Heart left ventricle (tissue), 16 donors: ENCODE measurements at regions of chr7 and their contacts with region 1.

Region 1: DNA sequence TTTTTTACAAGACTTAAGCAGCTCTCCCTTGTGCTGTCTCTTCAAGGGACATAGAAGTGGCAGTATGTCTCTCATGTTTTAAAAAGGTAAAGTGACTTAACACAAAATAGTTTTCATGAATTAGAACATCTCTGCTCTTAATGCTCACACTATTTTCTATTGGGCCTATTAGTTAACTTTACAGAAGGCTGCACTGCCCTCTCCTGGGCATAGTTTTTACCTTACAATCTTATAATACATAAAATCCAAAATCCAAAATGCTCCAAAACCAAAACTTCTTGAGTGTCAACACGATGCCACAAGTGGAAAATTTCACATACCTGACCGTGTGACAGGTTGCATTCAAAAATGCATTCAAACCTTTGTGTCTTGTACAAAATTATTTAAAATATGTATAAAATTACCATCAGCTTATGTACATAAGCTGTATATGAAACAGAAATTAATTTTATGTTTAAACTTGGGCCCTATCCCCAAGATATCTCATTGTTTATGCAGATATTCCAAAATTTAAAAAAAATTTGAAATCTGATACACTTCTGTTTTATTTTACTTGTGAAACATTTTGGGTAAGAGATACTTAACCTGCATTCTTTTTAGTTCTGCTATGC is 25.8 kb downstream of the TES start:
- DNase-seq: peak in 3 of 5 donors; percentile 41 to 54 (median 52)
- ATAC-seq: peak in 3 of 4 donors; percentile 55 to 65 (median 56)
- H3K4me3 ChIP-seq: no peak overlapping the region
- H3K27ac ChIP-seq: peak overlapping the region in 1 of 12 donors; percentile 82
- H3K4me1 ChIP-seq: peaks cover 1 to 35% (median 13%) of the 10 kb centered on the region in 12 donors
- H3K27me3 ChIP-seq: no peaks in the 10 kb centered on the region
- CTCF ChIP-seq: peak; percentile 41 to 78 (median 58)
- POLR2A ChIP-seq: no peak

Region 2: GRCh38 chr7:116138202-116138801 is 97.8 kb before region 1 on chr7:
- intact Hi-C with region 1: loop called in 2 of 10 experiments (anchors 2 kb)
- DNase-seq: no peak
- ATAC-seq: peak; percentile 63 to 88 (median 84)
- H3K4me3 ChIP-seq: no peak overlapping the region
- H3K27ac ChIP-seq: peak overlapping the region in 1 of 12 donors; percentile 64
- H3K4me1 ChIP-seq: peaks cover 0 to 9% (median 0%) of the 10 kb centered on the region in 12 donors
- H3K27me3 ChIP-seq: no peaks in the 10 kb centered on the region
- CTCF ChIP-seq: peak; percentile 64 to 86 (median 77)
- POLR2A ChIP-seq: no peak

Region 3: DNA sequence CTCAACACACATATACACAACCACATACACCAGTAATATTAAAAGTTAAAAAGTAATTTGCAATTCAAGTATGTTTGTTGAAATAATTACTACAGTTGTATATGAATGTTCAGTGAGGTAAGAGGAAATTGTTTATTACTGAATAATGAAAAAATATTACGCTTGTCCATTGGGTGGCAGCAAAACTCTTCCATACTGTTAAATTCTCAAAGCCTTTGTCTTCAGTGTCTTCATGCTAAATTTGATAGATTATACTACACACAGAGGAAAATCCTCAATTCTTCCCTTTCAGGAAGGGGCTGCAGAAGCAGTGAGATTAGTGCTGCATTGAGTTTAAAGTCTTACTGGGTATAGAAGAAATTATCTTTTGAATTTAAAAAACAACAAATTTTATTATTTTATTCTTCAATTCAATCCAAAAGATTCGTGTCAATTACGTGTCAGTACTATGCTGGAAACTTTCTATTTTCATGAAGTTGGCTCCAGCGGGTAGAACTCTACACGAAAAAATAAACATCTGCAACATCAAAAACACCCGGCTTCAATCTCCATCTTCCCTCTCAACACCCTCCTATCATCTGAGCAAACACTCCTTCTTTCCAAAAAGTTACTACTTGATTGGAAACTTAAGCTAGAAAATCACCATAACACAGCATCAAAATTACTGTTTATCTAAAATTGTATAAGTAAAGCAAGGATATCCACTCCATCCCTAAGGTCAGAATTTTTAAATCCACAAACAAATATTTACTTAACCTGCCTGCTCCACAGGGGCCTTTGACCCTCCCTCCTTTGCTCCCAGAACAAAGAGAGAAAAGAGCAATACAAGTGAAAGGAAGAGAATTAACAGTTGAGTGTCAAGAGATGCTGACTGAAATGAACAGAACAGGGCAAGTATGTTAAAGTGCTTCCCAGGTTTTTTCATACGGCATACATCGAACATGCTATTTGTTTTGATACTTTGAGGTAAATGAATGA is 62.8 kb before region 1 on chr7:
- intact Hi-C with region 1: loop called in 5 of 10 experiments (anchors 2 to 5 kb)
- DNase-seq: no peak
- ATAC-seq: peak in 3 of 4 donors; percentile 36 to 59 (median 57)
- H3K4me3 ChIP-seq: no peak overlapping the region
- H3K27ac ChIP-seq: no peak overlapping the region
- H3K4me1 ChIP-seq: peaks cover 0 to 4% (median 0%) of the 10 kb centered on the region in 12 donors
- H3K27me3 ChIP-seq: no peaks in the 10 kb centered on the region
- CTCF ChIP-seq: peak; percentile 30 to 68 (median 58)
- POLR2A ChIP-seq: no peak

Region 4: DNA sequence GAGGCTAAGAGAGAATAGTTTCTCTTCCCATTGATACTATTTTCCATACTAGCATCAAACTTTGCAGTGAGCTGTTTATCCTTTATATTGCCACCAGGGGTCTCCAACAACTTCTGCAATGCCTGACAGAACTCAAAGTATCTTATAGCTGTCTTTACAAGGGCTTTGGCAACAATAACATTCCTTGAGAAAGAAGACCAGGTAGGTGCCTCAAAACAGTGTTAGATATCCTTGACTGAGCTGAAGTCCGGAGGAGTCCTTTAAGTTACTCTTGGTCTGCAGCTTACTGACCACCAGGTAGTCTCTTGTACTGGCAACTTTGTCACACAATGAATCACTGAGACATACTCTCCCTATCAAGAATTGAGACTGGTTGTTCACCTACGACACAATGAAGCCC is 55.8 kb before region 1 on chr7:
- intact Hi-C with region 1: loop called (anchors 1 to 2 kb)
- DNase-seq: no peak
- ATAC-seq: peak in 2 of 4 donors; percentile 22 to 53
- H3K4me3 ChIP-seq: no peak overlapping the region
- H3K27ac ChIP-seq: no peak overlapping the region
- H3K4me1 ChIP-seq: no peaks in the 10 kb centered on the region
- H3K27me3 ChIP-seq: no peaks in the 10 kb centered on the region
- CTCF ChIP-seq: peak; percentile 64 to 88 (median 79)
- POLR2A ChIP-seq: no peak

Region 5: GRCh38 chr7:116194115-116194514 is 42.0 kb before region 1 on chr7:
- intact Hi-C with region 1: loop called in 1 of 10 experiments (anchors 5 kb)
- DNase-seq: no peak
- ATAC-seq: no peak
- H3K4me3 ChIP-seq: no peak overlapping the region
- H3K27ac ChIP-seq: no peak overlapping the region
- H3K4me1 ChIP-seq: no peaks in the 10 kb centered on the region
- H3K27me3 ChIP-seq: no peaks in the 10 kb centered on the region
- CTCF ChIP-seq: no peak
- POLR2A ChIP-seq: no peak

Region 6: GRCh38 chr7:116211006-116211912 is 24.9 kb before region 1 on chr7:
- intact Hi-C with region 1: loop called in 1 of 10 experiments (anchors 2 kb)
- DNase-seq: peak; percentile 74 to 81 (median 79)
- ATAC-seq: peak; percentile 89 to 97 (median 94)
- H3K4me3 ChIP-seq: peak overlapping the region; percentile 58 to 87 (median 80)
- H3K27ac ChIP-seq: peak overlapping the region; percentile 82 to 97 (median 91)
- H3K4me1 ChIP-seq: peaks cover 0 to 50% (median 21%) of the 10 kb centered on the region in 12 donors
- H3K27me3 ChIP-seq: no peaks in the 10 kb centered on the region
- CTCF ChIP-seq: no peak
- POLR2A ChIP-seq: peak in 1 of 2 donors; percentile 84

Region 7: DNA sequence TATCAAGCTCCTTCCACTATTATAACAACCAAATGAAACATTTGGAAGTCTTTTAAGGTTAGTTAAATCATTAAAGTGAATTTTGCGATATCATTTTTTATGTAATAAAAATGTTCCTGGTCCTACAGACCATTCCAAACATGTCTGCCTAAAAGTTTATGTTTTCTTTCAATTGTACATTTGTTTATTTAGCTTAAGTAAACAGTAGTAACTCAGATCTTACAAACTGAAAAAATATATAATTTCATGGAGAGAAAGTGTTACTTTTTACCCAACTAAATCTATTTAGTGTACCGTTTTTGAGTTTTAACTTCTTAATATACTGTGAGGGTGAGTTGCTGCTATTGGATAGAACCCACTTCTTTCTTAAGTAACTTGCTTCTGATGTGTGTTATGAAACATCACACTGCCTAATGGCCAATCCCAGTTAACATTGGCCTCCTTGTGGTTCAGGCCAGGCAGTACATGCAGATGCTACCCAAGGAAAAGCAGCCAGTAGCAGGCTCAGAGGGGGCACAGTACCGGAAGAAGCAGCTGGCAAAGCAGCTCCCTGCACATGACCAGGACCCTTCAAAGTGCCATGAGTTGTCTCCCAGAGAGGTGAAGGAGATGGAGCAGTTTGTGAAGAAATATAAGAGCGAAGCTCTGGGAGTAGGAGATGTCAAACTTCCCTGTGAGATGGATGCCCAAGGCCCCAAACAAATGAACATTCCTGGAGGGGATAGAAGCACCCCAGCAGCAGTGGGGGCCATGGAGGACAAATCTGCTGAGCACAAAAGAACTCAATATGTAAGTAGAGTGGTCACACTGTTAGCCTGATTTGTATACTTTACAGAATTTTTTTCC is 13.8 kb after region 1 on chr7:
- intact Hi-C with region 1: loop called in 1 of 10 experiments (anchors 2 kb)
- DNase-seq: no peak
- ATAC-seq: peak in 3 of 4 donors; percentile 24 to 51 (median 26)
- H3K4me3 ChIP-seq: no peak overlapping the region
- H3K27ac ChIP-seq: peak overlapping the region in 1 of 12 donors; percentile 32
- H3K4me1 ChIP-seq: peaks cover 0 to 2% (median 0%) of the 10 kb centered on the region in 12 donors
- H3K27me3 ChIP-seq: no peaks in the 10 kb centered on the region
- CTCF ChIP-seq: peak; percentile 7 to 46 (median 20)
- POLR2A ChIP-seq: no peak

Region 8: DNA sequence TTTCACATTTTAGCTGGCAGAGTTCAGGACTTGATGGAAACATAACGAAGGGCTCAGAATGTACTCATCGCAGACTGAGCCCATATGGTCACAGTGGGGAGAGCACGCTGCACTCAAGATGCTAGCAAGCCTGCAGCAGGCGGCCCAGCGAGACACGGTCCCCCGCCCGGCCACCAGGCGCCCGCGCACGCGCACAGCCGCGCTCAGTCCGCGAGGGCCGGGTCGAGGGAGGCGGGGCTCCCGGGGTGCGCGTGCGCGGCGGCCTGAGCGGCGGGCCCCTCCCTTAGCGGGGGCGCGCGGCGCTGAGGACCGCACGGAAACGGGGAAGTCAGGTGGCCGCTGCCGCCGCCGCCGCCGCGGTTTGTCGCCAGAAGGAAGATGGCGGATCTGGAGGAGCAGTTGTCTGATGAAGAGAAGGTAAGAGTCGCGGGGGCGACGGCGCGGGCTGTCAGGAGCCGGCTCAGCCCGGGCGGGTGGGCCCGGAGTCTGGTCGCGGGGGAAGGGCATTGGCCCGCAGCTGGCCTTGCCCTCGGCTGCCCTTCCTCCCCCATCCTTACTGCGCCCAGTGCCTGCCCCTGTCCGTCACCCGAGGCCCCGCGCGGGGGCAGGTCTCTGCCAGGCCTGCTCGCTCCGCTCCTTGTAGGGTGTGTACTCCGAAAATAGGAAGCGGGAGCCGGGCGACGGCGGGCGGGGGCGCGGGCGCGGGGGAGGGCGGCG is 626.3 kb after region 1 on chr7 and contains the start of gene CAPZA2:
- intact Hi-C with region 1: no loop called
- DNase-seq: peak; percentile 94 to 98 (median 95)
- ATAC-seq: peak; percentile 90 to 97 (median 95)
- H3K4me3 ChIP-seq: peak within 1 kb of the TSS; percentile 68 to 98 (median 92)
- H3K27ac ChIP-seq: peak within 1 kb of the TSS; percentile 97 to 100 (median 99)
- H3K4me1 ChIP-seq: peaks cover 0 to 44% (median 28%) of the 10 kb centered on the region in 12 donors
- H3K27me3 ChIP-seq: no peaks in the 10 kb centered on the region
- CTCF ChIP-seq: peak in 7 of 12 donors; percentile 21 to 59 (median 37)
- POLR2A ChIP-seq: peak in 1 of 2 donors; percentile 79
- total RNA-seq, gene CAPZA2: 114 to 483 (median 332) TPM